Activated naive CD4-positive, alpha-beta T cell treated with anti-CD3 and anti-CD28 coated beads for 36 hours (primary cell): ENCODE measurements at regions of chr3 and their contacts with region 1.

Region 1: DNA sequence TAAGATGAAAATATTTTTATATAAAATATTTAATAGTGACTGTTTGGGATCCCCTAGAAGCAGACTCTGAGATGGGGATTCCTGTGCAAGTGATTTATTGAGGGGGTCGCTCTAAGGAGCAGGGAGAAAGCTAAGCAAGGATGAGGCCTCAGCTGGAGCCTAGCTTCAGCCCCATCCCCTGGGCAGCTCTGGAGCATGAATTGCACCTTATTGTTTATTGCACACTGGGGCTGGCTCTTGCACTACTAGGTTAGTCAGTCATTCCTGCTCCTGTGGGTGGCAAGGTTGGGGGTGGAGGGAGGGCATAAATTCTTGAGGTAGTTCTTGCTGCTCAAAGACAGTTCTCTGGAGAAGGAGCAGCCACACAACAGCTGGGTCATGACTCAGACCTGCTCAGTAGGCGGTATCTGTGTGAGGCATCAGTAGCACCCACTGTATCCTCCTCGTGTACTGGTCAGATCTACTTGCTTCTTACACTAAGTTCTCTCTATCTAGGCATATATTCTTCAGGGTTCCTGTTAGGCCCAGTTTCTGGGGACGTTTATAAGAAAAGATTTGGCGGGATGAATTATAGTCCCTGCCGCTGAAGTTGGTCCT is 27.2 kb upstream of the TNFSF10 start:
- DNase-seq: peak; percentile 91
- H3K4me3 Mint-ChIP-seq: no peak overlapping the region
- H3K27ac Mint-ChIP-seq: peak overlapping the region; percentile 42
- H3K4me1 Mint-ChIP-seq: peaks cover 46% of the 10 kb centered on the region
- H3K27me3 Mint-ChIP-seq: no peaks in the 10 kb centered on the region

Region 2: DNA sequence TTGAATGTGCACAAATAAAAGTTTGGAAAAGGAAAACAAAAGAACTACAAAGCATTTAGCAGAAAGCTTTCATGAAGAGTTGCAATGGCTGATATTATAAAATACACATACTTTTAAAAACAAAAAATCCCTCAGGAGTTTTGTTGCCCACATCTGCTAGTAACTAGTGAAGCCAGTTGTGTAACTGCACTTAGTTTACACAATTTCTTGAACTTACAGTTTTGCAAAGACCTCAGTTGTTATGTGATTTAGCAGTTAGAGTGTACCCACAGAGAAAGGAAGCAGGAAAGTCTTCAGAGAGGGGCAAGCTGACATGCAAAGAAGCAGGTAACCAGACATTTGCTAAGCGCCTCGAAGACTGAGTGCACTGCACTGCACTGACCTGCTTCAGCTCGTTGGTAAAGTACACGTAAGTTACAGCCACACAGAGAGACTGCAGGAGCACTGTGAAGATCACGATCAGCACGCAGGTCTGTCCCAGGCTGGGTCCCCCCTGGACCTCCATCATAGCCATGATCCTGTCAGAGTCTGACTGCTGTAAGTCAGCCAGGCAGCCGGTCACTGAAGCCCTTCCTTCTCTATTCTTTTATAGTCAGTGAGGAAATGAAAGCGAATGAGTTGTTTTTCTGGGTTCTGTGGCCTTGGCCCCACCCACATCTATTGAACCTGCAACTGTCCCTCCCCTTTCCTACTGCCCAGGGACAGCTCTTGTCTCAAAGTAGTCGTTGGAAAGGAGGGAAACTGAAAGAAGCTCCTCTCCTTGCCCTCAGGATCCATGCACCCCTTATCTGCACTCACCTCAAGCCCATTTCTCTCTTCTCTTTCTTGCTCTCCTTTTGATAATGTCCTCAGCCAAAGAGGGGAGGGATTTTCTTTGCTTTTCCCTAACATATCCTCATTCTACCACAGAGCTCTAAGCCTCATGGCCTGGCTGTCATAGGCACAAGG is 27.3 kb before region 1 on chr3 and contains the start of gene TNFSF10:
- CTCF ChIA-PET with region 1: interaction called, 4 read pairs
- intact Hi-C with region 1: loop called (anchors 1 kb)
- DNase-seq: peak; percentile 78
- H3K4me3 Mint-ChIP-seq: peak within 1 kb of the TSS; percentile 96
- H3K27ac Mint-ChIP-seq: peak within 1 kb of the TSS; percentile 96
- H3K4me1 Mint-ChIP-seq: peaks cover 42% of the 10 kb centered on the region
- H3K27me3 Mint-ChIP-seq: no peaks in the 10 kb centered on the region
- total RNA-seq, gene TNFSF10: 31.8 to 32.7 TPM

Region 3: GRCh38 chr3:172536993-172537419 is 13.4 kb before region 1 on chr3:
- CTCF ChIA-PET with region 1: interaction called, 3 read pairs
- intact Hi-C with region 1: loop called (anchors 1 kb)
- DNase-seq: peak; percentile 49
- H3K4me3 Mint-ChIP-seq: peak overlapping the region; percentile 8
- H3K27ac Mint-ChIP-seq: peak overlapping the region; percentile 91
- H3K4me1 Mint-ChIP-seq: peaks cover 40% of the 10 kb centered on the region
- H3K27me3 Mint-ChIP-seq: no peaks in the 10 kb centered on the region